Calu3 (cell line): ENCODE measurements at regions of chr11 and their contacts with region 1.

Region 1: DNA sequence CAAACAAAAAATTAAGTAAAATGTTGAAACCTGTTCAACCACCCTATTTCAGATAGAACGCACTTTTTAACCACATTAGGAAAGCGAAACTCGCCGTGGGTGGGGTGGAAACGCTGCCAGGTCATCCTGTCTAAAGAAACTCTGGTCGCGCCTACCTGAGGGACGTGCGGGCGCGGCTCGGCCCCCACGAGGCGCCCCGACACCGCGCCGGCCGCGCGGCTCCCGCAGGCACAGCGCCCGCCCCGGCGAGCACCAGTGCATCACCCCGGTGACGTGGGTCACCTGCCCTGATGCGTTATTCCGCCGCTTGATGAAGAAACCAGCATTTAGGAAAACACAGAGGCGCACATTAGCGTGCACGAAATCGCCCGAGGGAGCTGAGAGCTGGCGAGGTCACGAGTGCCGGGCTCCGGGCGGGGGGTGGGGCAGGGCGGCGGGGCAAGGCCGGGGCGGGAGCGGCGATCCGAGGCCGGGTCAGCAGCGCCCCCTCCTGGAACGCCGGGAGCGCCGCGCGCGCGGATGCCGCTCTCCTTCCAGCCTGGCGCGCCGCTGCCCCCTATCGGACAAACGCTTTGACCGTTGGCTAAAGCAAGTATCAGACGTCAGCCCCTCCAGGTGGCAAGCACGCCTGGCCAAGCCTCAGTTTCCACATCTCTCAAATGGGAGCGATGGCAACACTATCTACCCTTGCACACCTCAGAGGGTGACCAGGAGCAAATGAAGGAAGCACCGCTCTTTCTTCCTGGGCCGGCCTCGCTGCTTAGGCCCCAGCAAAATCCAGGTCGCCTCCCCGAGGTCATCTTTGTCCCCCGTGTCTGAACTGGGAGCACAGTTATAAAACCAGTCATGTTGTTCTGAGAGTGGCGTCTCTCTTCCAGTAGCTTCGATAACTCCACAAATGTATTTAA is 15.7 kb upstream of the SNX32 start:
- DNase-seq: peak; percentile 97
- H3K4me3 Mint-ChIP-seq: peak overlapping the region; percentile 66
- H3K27ac Mint-ChIP-seq: no peak overlapping the region
- H3K4me1 Mint-ChIP-seq: no peaks in the 10 kb centered on the region
- H3K27me3 Mint-ChIP-seq: no peaks in the 10 kb centered on the region
- CTCF ChIP-seq: peak; percentile 100

Region 2: GRCh38 chr11:65743928-65744698 is 74.0 kb before region 1 on chr11:
- CTCF ChIA-PET with region 1: interaction called, 9 read pairs
- intact Hi-C with region 1: loop called (anchors 2 kb)
- DNase-seq: peak; percentile 60
- H3K4me3 Mint-ChIP-seq: no peak overlapping the region
- H3K27ac Mint-ChIP-seq: no peak overlapping the region
- H3K4me1 Mint-ChIP-seq: no peaks in the 10 kb centered on the region
- H3K27me3 Mint-ChIP-seq: peaks cover 79% of the 10 kb centered on the region
- CTCF ChIP-seq: peak; percentile 33

Region 3: GRCh38 chr11:65773784-65774411 is 44.2 kb before region 1 on chr11:
- CTCF ChIA-PET with region 1: interaction called, 39 read pairs
- intact Hi-C with region 1: loop called (anchors 5 kb)
- DNase-seq: no peak
- H3K4me3 Mint-ChIP-seq: no peak overlapping the region
- H3K27ac Mint-ChIP-seq: no peak overlapping the region
- H3K4me1 Mint-ChIP-seq: no peaks in the 10 kb centered on the region
- H3K27me3 Mint-ChIP-seq: no peaks in the 10 kb centered on the region
- CTCF ChIP-seq: no peak

Region 4: DNA sequence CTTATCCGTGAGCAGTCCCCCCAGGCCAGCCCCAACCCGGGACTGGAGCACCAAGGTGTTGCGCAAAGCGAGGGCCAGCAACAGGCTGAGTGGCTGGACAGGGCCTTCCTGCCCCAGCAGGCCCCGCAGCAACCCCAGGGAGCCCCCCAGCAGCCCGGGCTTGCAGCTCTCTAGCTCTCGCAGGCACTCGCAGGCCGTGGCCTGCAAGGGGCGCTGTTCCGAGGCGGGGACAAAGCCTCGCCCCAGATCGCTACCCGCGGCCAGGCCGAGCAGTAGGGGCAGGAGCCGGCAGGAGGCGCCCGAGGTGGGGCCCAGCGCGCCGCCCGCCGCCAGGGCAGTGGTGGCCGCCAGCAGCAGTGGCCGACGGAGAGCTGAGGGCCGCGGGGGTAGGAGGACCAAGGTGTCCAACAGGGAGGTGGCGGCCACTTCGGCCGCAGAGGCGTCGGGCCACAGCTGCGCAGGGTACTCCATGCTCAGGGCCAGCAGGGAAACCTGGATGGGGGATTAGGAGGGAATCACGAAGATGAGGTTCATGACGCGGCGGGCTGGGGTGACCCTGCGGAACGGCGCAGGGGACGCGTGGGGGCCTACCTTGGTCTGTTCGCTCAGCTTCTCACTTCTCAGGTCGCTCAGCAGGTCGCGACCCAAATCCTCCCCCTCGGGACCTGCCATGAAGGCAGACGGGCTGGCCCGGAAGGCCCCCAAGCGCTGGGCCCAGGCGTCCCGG is 38.1 kb before region 1 on chr11:
- CTCF ChIA-PET with region 1: interaction called, 39 read pairs
- intact Hi-C with region 1: no loop called
- DNase-seq: peak; percentile 93
- H3K4me3 Mint-ChIP-seq: peak overlapping the region; percentile 98
- H3K27ac Mint-ChIP-seq: peak overlapping the region; percentile 96
- H3K4me1 Mint-ChIP-seq: peaks cover 16% of the 10 kb centered on the region
- H3K27me3 Mint-ChIP-seq: no peaks in the 10 kb centered on the region
- CTCF ChIP-seq: peak; percentile 94